Transverse colon (tissue), 4 donors: ENCODE measurements at regions of chr11 and their contacts with region 1.

Region 1: DNA sequence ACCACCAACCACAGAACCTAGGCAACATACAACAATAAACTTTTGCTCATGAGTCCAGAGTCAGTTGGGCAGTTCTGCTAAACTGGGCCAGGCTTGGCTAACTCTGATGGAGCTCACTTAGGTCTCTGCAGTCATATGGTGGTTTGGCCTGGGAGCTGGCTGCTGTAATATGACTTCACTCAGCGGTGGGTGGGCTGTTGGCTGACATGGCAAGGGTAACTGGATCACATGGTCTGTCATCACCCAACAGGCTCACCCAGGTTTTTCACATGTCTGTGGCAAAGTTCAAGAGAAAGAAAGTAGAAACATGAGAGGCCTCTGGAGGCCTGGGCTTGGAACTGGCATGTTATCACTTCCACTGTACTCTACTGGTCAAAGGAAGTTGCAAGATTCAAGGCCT is 43.2 kb upstream of the CLMP start:
- DNase-seq: no peak
- H3K4me3 ChIP-seq: no peak overlapping the region
- H3K27ac ChIP-seq: no peak overlapping the region
- H3K4me1 ChIP-seq: peaks cover 0 to 7% (median 4%) of the 10 kb centered on the region in 4 donors
- H3K27me3 ChIP-seq: no peaks in the 10 kb centered on the region
- CTCF ChIP-seq: no peak
- EP300 ChIP-seq: no peak
- POLR2A ChIP-seq: no peak

Region 2: DNA sequence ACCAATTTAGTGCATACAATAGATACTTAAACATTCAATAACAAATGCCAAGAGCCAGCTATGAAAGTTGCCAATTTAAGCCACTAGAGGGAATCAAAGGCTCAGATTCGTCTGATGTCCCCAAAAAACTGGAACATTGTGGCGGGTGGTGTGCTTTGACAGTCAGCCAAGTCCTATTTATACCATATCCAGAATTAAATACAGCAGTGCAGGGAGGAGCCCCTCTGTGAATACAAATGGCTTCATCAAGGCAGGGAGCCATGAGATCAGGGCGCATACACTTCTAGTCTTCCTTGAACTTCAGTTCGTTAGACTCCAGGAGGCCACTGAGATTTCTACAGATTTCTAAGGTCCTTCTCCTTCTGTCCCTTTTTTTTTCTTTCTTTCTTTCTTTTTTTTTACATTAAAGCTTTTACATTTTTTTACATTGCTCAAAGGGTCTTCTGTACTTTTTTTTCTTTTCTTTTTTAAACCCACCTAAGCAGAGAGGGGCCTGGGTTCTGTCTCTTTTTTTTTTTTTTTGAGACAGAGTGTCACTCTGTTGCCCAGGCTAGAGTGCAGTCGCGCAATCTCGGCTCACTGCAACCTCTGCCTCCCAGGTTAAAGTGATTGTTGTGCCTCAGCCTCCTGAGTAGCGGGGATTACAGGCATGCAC is 134.8 kb before region 1 on chr11:
- in situ Hi-C with region 1: no loop called
- intact Hi-C with region 1: loop called (anchors 2 kb)
- DNase-seq: peak; percentile 30
- H3K4me3 ChIP-seq: no peak overlapping the region
- H3K27ac ChIP-seq: peak overlapping the region; percentile 38 to 67 (median 62)
- H3K4me1 ChIP-seq: peaks cover 10 to 22% (median 12%) of the 10 kb centered on the region in 4 donors
- H3K27me3 ChIP-seq: no peaks in the 10 kb centered on the region
- CTCF ChIP-seq: peak; percentile 46 to 65 (median 51)
- EP300 ChIP-seq: no peak
- POLR2A ChIP-seq: no peak

Region 3: GRCh38 chr11:123116486-123116885 is 121.8 kb before region 1 on chr11:
- in situ Hi-C with region 1: loop called (anchors 5 to 10 kb)
- intact Hi-C with region 1: no loop called
- DNase-seq: no peak
- H3K4me3 ChIP-seq: no peak overlapping the region
- H3K27ac ChIP-seq: no peak overlapping the region
- H3K4me1 ChIP-seq: peaks cover 0 to 5% (median 2%) of the 10 kb centered on the region in 4 donors
- H3K27me3 ChIP-seq: no peaks in the 10 kb centered on the region
- CTCF ChIP-seq: no peak
- EP300 ChIP-seq: no peak
- POLR2A ChIP-seq: no peak